ENCODE measurements at regions of chr1 and their contacts with region 1.

Region 1: DNA sequence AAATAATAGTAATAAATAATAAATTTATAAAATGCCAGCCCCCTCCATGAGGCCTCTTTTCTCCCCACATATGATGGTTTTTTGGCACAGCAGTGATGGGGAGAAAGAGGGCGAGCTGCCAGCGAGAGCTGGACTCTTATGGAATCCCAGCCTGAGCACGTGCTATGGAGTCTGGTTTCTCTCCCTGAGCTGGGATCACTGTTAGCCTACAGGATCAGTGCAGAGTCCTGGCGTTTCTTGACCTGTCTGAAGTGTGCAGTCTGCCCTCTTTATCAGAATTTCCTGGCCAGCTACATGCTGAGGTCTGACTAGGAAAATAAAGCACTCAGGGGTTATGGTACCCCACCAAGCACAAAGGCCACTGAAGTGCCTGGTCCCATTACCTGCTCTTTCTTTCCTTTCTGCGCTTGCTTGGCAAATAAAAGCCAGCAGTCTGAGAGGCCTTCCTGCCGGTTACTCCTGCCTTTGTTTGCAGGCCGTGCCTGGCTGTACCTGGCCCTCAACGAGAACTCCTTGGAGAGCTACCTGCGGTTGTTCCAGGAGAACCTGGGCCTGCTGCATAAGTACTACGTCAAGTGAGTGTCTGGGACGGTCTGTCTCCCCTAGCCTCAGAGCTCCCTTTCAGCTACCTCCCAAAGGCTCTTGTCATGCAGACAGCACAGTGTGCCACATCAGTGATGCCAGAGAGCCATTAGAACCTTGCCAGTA is 18.5 kb upstream of the SLC25A34 start:
- DNase-seq: no peak
- H3K4me3 ChIP-seq: no peak overlapping the region
- H3K27ac ChIP-seq: no peak overlapping the region
- H3K4me1 ChIP-seq: no peaks in the 10 kb centered on the region
- H3K27me3 ChIP-seq: no peaks in the 10 kb centered on the region
- CTCF ChIP-seq: no peak
- EP300 ChIP-seq: no peak
- POLR2A ChIP-seq: no peak
- RAD21 ChIP-seq: no peak

Region 2: GRCh38 chr1:15703562-15703961 is 14.0 kb before region 1 on chr1:
- CTCF ChIA-PET with region 1: interaction called, 12 read pairs
- POLR2A ChIA-PET with region 1: no interaction called
- DNase-seq: no peak
- H3K4me3 ChIP-seq: no peak overlapping the region
- H3K27ac ChIP-seq: no peak overlapping the region
- H3K4me1 ChIP-seq: no peaks in the 10 kb centered on the region
- H3K27me3 ChIP-seq: no peaks in the 10 kb centered on the region
- CTCF ChIP-seq: no peak
- EP300 ChIP-seq: no peak
- POLR2A ChIP-seq: no peak
- RAD21 ChIP-seq: no peak

Region 3: GRCh38 chr1:15731735-15732685 is 14.4 kb after region 1 on chr1:
- CTCF ChIA-PET with region 1: interaction called, 15 read pairs
- POLR2A ChIA-PET with region 1: interaction called, 4 read pairs
- DNase-seq: no peak
- H3K4me3 ChIP-seq: no peak overlapping the region
- H3K27ac ChIP-seq: no peak overlapping the region
- H3K4me1 ChIP-seq: peaks cover 0 to 8% (median 4%) of the 10 kb centered on the region in 4 experiments; a peak in 4 of 7 replicates
- H3K27me3 ChIP-seq: no peaks in the 10 kb centered on the region
- CTCF ChIP-seq: no peak
- EP300 ChIP-seq: no peak
- POLR2A ChIP-seq: no peak
- RAD21 ChIP-seq: peak in 1 of 2 experiments; percentile 10; a peak in 1 of 4 replicates

Measured in H1 (cell line).